ENCODE measurements at regions of chr10 and their contacts with region 1.

Region 1: DNA sequence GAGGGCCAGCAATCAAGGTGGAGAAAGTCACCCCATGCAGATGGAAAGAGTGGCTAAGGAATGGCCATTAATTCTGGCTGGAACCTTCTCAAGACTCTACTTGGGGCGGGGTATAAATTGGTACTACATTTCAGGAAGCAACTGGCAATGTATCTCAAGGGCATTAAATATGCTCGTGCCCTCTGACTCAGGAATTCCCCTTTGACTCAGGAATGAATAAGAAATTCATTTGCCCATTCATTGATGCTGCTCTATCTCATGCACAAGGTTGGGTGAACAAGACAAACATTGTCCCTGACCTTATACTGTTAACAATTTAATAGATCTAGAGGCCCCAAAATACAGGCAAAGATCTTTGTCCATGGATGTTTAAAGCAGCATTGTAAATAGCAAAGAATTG is 188.1 kb downstream of the MYOF start:
- DNase-seq: peak; percentile 72

Region 2: GRCh38 chr10:93106631-93107072 is 187.3 kb before region 1 on chr10:
- in situ Hi-C with region 1: loop called (anchors 10 kb)
- DNase-seq: no peak

Measured in Caki2 (cell line).